ENCODE measurements at regions of chr13 and their contacts with region 1.

Region 1: DNA sequence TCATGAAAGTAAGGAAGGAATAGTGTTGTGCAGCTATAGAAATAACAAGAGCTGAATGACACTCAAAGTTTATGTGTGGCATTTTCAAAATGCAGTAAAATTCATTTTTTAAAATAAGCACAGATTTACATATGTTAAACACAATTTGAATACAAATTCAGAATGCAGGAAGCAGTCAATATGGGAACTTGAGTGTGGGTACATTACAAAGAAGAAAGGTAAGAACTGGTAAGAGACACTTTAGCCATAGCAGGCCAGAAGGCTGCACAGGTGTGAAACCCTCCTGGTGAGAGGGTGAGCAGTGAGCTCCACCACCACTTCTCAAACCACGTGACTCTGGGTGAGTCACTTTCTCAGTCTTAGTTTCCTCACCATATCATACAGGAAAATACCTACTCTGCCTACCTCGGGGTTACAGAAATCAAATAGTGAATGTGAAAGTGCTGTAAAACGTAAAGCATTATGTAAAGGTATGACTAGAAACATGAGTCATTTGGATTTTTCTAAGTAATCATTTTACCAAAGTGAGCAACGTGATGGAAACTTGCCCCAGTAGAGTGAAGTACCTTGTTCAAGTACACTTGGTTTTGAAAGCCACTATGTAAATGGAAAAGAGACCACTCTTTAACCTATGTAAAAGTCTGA is 40.5 kb downstream of the USP12 start:
- DNase-seq: peak in 3 of 9 donors; percentile 13 to 71 (median 46)
- ATAC-seq: peak; percentile 90
- H3K4me3 ChIP-seq: no peak overlapping the region
- H3K4me3 Mint-ChIP-seq: peak overlapping the region in 5 of 10 donors; percentile 29 to 71 (median 47)
- H3K27ac ChIP-seq: no peak overlapping the region
- H3K27ac Mint-ChIP-seq: peak overlapping the region in 5 of 9 donors; percentile 60 to 87 (median 76)
- H3K4me1 ChIP-seq: peaks cover 0 to 14% of the 10 kb centered on the region in 2 donors
- H3K4me1 Mint-ChIP-seq: peaks cover 46 to 89% (median 82%) of the 10 kb centered on the region in 7 donors
- H3K27me3 ChIP-seq: no peaks in the 10 kb centered on the region
- H3K27me3 Mint-ChIP-seq: no peaks in the 10 kb centered on the region

Region 2: DNA sequence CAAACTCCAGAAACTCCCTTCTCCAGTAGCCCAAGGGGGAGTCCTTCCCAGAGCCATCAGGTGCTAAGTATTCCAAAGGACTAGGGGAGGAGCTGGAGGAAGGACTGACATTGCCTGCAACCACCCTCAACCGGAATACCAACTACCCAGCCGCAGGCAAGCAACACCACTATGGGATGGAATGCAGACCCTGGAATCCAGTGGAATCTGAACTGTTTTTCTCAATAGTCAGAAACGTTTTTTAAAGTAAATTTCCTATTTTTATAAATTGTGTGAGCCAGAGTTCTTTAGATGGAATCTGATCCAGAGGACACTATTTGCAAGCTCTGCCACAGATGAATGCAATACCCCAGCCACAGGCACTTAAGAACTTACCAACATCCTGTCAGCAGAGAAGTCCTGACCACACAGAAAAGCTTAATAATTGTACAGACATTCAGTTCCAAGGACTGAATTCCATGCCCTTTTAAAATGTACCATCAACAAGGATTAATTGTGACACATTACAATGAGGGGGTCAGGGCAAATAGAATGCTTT is 51.6 kb before region 1 on chr13:
- CTCF ChIA-PET with region 1: no interaction called
- POLR2A ChIA-PET with region 1: no interaction called
- intact Hi-C with region 1: loop called in 1 of 2 experiments (anchors 5 kb)
- DNase-seq: no peak
- ATAC-seq: no peak
- H3K4me3 ChIP-seq: no peak overlapping the region
- H3K4me3 Mint-ChIP-seq: no peak overlapping the region
- H3K27ac ChIP-seq: no peak overlapping the region
- H3K27ac Mint-ChIP-seq: no peak overlapping the region
- H3K4me1 ChIP-seq: no peaks in the 10 kb centered on the region
- H3K4me1 Mint-ChIP-seq: peaks cover 9 to 20% (median 15%) of the 10 kb centered on the region in 7 donors
- H3K27me3 ChIP-seq: no peaks in the 10 kb centered on the region
- H3K27me3 Mint-ChIP-seq: no peaks in the 10 kb centered on the region

Region 3: DNA sequence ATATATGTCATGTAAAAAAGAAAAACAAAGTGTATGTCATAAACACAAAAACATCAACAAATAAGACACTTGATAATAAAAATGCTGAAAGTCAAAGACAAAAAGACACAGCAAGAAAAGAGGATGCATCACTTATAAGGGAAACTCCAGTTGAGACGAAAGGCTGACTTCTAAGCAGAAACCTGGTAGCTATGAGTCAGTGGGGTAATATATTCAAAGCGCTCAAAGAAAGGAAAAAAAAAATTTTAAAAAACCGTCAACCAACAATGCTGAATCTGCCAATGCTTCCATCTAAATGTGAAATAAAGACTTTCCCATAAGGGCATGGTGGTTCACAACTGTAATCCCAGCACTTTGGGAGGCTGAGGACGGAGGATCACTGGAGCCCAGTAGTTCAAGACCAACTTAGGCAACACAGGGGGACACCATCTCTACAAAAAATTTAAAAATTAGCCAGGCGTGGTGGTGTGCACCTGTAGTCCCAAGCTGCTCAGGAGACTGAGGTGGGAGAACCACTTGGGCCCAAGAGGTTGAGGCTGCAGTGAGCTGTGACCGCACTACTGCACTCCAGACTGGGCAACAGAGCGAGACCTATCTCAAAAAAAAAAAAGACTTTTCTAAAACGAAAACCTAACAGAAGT is 16.5 kb after region 1 on chr13:
- CTCF ChIA-PET with region 1: interaction called, 8 read pairs
- POLR2A ChIA-PET with region 1: no interaction called
- intact Hi-C with region 1: loop called in 1 of 2 experiments (anchors 1 kb)
- DNase-seq: peak in 1 of 9 donors; percentile 26
- ATAC-seq: peak; percentile 71
- H3K4me3 ChIP-seq: no peak overlapping the region
- H3K4me3 Mint-ChIP-seq: peak overlapping the region in 6 of 10 donors; percentile 3 to 43 (median 22)
- H3K27ac ChIP-seq: no peak overlapping the region
- H3K27ac Mint-ChIP-seq: peak overlapping the region in 5 of 9 donors; percentile 10 to 67 (median 67)
- H3K4me1 ChIP-seq: peaks cover 0 to 10% of the 10 kb centered on the region in 2 donors
- H3K4me1 Mint-ChIP-seq: peaks cover 35 to 80% (median 71%) of the 10 kb centered on the region in 7 donors
- H3K27me3 ChIP-seq: no peaks in the 10 kb centered on the region
- H3K27me3 Mint-ChIP-seq: no peaks in the 10 kb centered on the region

Region 4: GRCh38 chr13:27424246-27425157 is 293.4 kb after region 1 on chr13 and contains the start of gene GTF3A:
- CTCF ChIA-PET with region 1: no interaction called
- POLR2A ChIA-PET with region 1: no interaction called
- intact Hi-C with region 1: loop called in 1 of 2 experiments (anchors 2 kb)
- DNase-seq: peak; percentile 83 to 97 (median 93)
- ATAC-seq: peak; percentile 77
- H3K4me3 ChIP-seq: peak within 1 kb of the TSS; percentile 71
- H3K4me3 Mint-ChIP-seq: peak within 1 kb of the TSS; percentile 81 to 96 (median 92)
- H3K27ac ChIP-seq: peak within 1 kb of the TSS; percentile 86
- H3K27ac Mint-ChIP-seq: peak within 1 kb of the TSS; percentile 88 to 98 (median 95)
- H3K4me1 ChIP-seq: peaks cover 24 to 45% of the 10 kb centered on the region in 2 donors
- H3K4me1 Mint-ChIP-seq: peaks cover 27 to 47% (median 42%) of the 10 kb centered on the region in 7 donors
- H3K27me3 ChIP-seq: no peaks in the 10 kb centered on the region
- H3K27me3 Mint-ChIP-seq: no peaks in the 10 kb centered on the region
- total RNA-seq, gene GTF3A: 123 to 254 (median 206) TPM

Region 5: GRCh38 chr13:27878274-27878673 is 747.2 kb after region 1 on chr13:
- CTCF ChIA-PET with region 1: no interaction called
- POLR2A ChIA-PET with region 1: no interaction called
- intact Hi-C with region 1: no loop called
- DNase-seq: no peak
- ATAC-seq: no peak
- H3K4me3 ChIP-seq: no peak overlapping the region
- H3K4me3 Mint-ChIP-seq: no peak overlapping the region
- H3K27ac ChIP-seq: no peak overlapping the region
- H3K27ac Mint-ChIP-seq: no peak overlapping the region
- H3K4me1 ChIP-seq: no peaks in the 10 kb centered on the region
- H3K4me1 Mint-ChIP-seq: no peaks in the 10 kb centered on the region
- H3K27me3 ChIP-seq: no peaks in the 10 kb centered on the region
- H3K27me3 Mint-ChIP-seq: peaks cover 33 to 77% (median 69%) of the 10 kb centered on the region in 5 donors

Measured in naive thymus-derived CD4-positive, alpha-beta T cell (primary cell).